ENCODE measurements at regions of chr3 and their contacts with region 1.

Region 1: DNA sequence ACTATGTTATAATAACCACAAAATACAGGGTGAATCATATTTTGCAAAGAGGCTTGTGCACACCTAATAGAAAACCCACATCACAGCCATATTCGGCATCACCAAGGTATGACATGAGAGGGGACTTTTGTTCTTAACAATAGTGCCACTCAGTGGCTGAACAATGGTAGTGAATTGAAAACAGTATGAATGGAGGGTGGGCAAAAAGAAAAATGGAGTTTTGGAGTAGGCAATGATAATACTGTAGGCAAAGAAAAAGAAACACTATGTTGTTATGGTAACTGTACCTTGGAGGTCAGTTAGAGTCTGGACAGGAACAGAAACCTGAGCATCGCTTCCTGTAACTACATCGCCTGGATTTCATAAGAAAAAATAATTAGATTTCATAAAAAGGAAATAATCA is 348.6 kb downstream of the PLCL2 start:
- DNase-seq: peak; percentile 56 to 69 (median 66)
- H3K4me3 ChIP-seq: no peak overlapping the region
- H3K4me3 Mint-ChIP-seq: peak overlapping the region in 2 of 8 donors; percentile 0
- H3K27ac ChIP-seq: no peak overlapping the region
- H3K27ac Mint-ChIP-seq: peak overlapping the region in 4 of 7 donors; percentile 1 to 84 (median 36)
- H3K4me1 ChIP-seq: peaks cover 18% of the 10 kb centered on the region
- H3K4me1 Mint-ChIP-seq: peaks cover 17 to 28% (median 25%) of the 10 kb centered on the region in 4 donors
- H3K27me3 ChIP-seq: no peaks in the 10 kb centered on the region
- H3K27me3 Mint-ChIP-seq: no peaks in the 10 kb centered on the region

Region 2: DNA sequence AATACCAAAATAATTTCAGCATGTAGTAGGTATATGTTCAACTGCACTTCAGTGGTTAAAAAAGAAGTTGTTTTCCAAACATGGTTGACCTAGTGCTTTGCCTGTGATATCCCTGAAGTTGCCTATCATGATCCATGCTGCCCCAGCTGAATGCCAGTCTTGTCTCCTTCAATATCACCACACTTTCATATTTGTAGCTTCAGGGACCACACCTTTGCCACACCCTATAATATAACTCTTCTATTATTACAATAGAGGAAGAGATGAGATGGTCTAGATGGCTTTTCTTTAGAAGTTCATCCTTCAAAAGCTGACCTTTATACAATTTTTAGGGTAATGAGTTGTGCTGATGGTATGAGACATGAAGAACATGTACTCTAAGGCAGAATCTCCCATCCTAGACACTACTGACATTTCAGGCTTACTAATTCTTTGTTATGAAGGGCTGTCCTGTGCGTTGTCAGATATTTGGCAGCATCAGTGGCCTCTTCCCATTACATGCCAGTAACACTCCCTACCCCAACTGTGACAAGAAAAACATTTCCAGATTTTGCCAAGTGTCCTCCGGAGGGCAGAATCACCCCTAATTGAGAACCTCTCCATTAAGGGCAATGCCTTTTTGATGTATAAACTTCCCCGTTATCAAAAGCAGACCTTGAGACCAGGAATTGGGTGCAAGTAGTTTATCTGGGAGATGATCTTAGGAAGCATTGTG is 424.8 kb before region 1 on chr3:
- CTCF ChIA-PET with region 1: interaction called, 3 read pairs
- POLR2A ChIA-PET with region 1: no interaction called
- intact Hi-C with region 1: loop called (anchors 1 kb)
- DNase-seq: no peak
- H3K4me3 ChIP-seq: no peak overlapping the region
- H3K4me3 Mint-ChIP-seq: no peak overlapping the region
- H3K27ac ChIP-seq: no peak overlapping the region
- H3K27ac Mint-ChIP-seq: peak overlapping the region in 1 of 7 donors; percentile 35
- H3K4me1 ChIP-seq: peaks cover 16% of the 10 kb centered on the region
- H3K4me1 Mint-ChIP-seq: peaks cover 19 to 35% (median 26%) of the 10 kb centered on the region in 4 donors
- H3K27me3 ChIP-seq: no peaks in the 10 kb centered on the region
- H3K27me3 Mint-ChIP-seq: peaks cover 0 to 2% of the 10 kb centered on the region in 2 donors

Region 3: DNA sequence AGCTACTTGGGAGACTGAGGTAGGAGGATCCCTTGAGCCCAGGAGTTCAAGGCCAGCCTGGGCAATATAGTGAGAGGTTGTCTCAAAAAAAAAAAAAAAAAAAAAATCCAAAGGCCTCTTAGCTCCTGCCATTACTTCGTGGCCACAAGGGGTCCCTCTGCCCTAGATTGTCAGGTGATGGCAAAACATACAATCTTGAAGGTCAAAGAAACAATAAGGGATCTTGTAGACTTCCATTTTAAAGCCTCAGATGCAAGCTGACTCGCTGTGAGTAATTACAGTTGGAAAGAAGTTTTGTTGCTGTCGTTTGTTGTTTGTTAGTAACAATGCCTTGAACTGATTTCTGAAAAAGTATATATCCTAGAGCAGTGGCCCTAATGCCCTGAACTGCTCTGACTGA is 404.6 kb before region 1 on chr3:
- CTCF ChIA-PET with region 1: interaction called, 35 read pairs
- POLR2A ChIA-PET with region 1: no interaction called
- intact Hi-C with region 1: loop called (anchors 1 kb)
- DNase-seq: peak; percentile 56 to 71 (median 59)
- H3K4me3 ChIP-seq: no peak overlapping the region
- H3K4me3 Mint-ChIP-seq: no peak overlapping the region
- H3K27ac ChIP-seq: no peak overlapping the region
- H3K27ac Mint-ChIP-seq: peak overlapping the region in 2 of 7 donors; percentile 20 to 32
- H3K4me1 ChIP-seq: peaks cover 14% of the 10 kb centered on the region
- H3K4me1 Mint-ChIP-seq: peaks cover 18 to 28% (median 26%) of the 10 kb centered on the region in 4 donors
- H3K27me3 ChIP-seq: no peaks in the 10 kb centered on the region
- H3K27me3 Mint-ChIP-seq: no peaks in the 10 kb centered on the region

Region 4: GRCh38 chr3:17023006-17023664 is 210.3 kb before region 1 on chr3:
- CTCF ChIA-PET with region 1: no interaction called
- POLR2A ChIA-PET with region 1: no interaction called
- intact Hi-C with region 1: loop called (anchors 5 kb)
- DNase-seq: peak; percentile 14 to 81 (median 36)
- H3K4me3 ChIP-seq: no peak overlapping the region
- H3K4me3 Mint-ChIP-seq: peak overlapping the region in 7 of 8 donors; percentile 4 to 84 (median 19)
- H3K27ac ChIP-seq: no peak overlapping the region
- H3K27ac Mint-ChIP-seq: peak overlapping the region; percentile 73 to 92 (median 84)
- H3K4me1 ChIP-seq: peaks cover 22% of the 10 kb centered on the region
- H3K4me1 Mint-ChIP-seq: peaks cover 49 to 75% (median 63%) of the 10 kb centered on the region in 4 donors
- H3K27me3 ChIP-seq: no peaks in the 10 kb centered on the region
- H3K27me3 Mint-ChIP-seq: no peaks in the 10 kb centered on the region

Region 5: DNA sequence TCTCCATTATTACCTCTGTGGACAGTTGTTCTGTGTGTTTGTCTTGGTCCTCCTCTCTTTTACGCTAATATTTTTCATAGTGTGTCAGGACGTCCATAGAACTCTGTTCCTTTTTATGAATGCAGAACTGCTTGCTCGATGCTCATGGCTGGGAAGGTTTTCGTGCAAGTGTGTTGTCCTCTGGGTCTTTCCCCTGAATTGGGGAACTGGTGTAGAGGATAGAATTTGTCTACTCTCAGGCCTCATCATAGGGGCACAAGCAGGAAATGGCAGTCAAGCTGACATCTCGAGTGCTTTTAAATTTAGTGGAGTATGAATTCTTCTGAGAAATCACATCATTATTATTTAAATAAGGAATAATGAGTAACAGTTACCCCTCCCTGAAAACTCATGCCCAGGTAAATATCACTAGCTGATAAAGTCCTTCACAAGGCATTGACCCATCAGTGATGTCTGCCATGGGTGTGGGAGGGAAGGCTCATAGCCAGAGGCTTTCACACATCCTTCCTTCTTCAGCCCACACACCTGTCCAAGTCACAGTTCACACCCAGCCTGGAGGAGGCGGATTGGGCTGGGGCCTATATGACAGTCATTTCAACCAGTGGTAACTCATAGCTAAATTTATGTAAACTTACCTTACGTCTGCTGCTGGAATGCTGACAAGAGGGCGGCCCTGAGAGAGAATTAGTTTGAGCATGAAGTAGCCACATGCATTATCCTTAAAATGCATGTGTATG is 122.6 kb before region 1 on chr3:
- CTCF ChIA-PET with region 1: no interaction called
- POLR2A ChIA-PET with region 1: no interaction called
- intact Hi-C with region 1: no loop called
- DNase-seq: no peak
- H3K4me3 ChIP-seq: no peak overlapping the region
- H3K4me3 Mint-ChIP-seq: no peak overlapping the region
- H3K27ac ChIP-seq: no peak overlapping the region
- H3K27ac Mint-ChIP-seq: no peak overlapping the region
- H3K4me1 ChIP-seq: no peaks in the 10 kb centered on the region
- H3K4me1 Mint-ChIP-seq: no peaks in the 10 kb centered on the region
- H3K27me3 ChIP-seq: no peaks in the 10 kb centered on the region
- H3K27me3 Mint-ChIP-seq: no peaks in the 10 kb centered on the region

Region 6: DNA sequence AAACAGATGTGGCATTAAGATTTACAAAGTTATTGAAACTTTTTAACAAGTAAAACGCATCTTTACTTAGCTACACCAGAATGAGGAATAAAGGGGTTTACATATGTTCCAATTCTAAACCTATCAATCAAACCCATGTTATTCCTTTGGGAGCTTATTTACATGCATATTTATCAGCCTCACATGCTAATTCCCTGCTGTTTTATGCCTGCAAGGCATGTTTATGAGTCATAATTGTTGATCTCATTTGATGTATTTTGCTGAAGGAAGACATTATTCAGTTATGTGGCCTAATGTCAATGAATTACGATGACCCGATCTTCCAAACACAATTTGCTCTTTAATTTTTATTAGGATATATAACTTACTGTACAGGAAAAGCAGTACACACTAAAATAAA is 236.1 kb after region 1 on chr3:
- CTCF ChIA-PET with region 1: no interaction called
- POLR2A ChIA-PET with region 1: no interaction called
- intact Hi-C with region 1: no loop called
- DNase-seq: no peak
- H3K4me3 ChIP-seq: no peak overlapping the region
- H3K4me3 Mint-ChIP-seq: no peak overlapping the region
- H3K27ac ChIP-seq: no peak overlapping the region
- H3K27ac Mint-ChIP-seq: no peak overlapping the region
- H3K4me1 ChIP-seq: no peaks in the 10 kb centered on the region
- H3K4me1 Mint-ChIP-seq: peaks cover 0 to under 1% (median under 1%) of the 10 kb centered on the region in 4 donors
- H3K27me3 ChIP-seq: no peaks in the 10 kb centered on the region
- H3K27me3 Mint-ChIP-seq: no peaks in the 10 kb centered on the region